HEK293 (cell line): ENCODE measurements at regions of chr1 and their contacts with region 1.

Region 1: DNA sequence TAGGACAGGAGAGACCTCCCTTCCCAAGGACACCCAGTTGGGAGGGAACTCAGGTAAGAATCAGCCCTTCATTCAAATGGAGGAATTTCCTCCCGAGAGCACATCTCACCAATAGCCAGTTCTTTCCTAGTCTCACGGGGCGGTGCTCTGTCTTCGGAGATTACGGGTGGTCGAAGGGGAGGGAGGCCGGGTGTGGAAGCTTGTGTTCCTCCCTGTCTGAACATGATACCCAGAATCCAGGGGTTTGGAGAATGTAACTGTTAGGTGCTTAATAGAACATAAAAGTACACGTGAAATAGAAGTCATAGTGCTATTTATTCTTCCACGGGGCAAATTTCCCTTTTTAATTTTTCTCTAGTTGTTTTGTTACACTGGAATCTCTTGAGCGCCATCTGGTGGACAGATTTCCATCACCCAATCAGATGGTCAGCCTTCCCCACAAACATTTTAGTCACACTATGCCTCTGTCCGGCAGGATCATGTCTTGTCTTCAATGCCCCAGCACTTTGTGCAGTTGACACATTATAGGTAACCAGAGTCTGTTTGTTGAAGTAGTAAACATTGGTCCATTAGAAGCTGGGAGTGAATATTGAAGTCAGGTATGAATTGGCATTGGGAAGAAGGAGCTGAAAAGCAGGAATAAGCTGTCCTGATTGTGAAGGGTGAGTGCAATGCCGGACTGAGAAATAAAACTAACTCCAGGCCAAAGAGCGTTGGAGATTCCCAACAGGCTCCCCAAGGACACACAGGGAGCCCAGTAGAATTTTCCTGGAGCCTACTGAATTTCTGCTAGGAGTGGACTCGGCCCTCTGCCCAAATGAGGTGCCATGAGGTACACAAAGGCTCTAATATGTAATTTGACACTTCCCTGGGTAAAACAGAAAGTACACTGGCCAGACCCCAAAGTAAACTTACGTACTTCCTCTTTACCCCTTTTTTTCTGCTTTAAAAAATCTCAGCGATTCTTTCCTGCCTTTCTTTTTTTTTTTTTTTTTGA is 27.6 kb upstream of the ZNF697 start:
- H3K4me3 ChIP-seq: peak overlapping the region; percentile 34
- H3K27ac ChIP-seq: no peak overlapping the region
- H3K4me1 ChIP-seq: no peaks in the 10 kb centered on the region; the same call in 1 of the 2 replicates
- CTCF ChIP-seq: peak; percentile 71

Region 2: DNA sequence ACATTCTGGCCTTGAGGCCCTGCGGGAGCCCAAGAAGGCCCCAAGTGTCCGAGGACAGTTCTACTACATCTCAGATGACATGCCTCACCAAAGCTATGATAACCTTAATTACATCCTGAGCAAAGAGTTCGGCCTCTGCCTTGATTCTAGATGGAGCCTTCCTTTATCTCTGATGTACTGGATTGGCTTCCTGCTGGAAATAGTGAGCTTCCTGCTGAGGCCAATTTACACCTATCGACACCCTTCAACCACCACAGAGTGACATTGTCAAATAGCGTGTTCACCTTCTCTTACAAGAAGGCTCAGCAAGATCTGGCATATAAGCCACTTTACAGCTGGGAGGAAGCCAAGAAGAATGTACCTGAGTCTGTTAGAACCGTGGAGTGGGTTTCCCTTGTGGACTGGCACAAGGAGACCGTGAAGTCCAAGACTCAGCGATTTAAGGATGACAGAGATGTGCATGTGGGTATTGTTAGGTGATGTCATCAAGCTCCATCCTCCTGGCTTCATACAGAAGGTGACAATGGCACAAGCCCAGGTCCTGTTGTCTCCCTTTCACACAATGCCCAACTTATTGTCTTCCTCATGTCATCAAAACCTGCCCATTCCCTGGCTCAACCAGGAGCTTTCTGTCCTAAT is 66.7 kb before region 1 on chr1:
- CTCF ChIA-PET with region 1: interaction called, 136 read pairs
- POLR2A ChIA-PET with region 1: interaction called, 4 read pairs
- H3K4me3 ChIP-seq: no peak overlapping the region
- H3K27ac ChIP-seq: no peak overlapping the region
- H3K4me1 ChIP-seq: no peaks in the 10 kb centered on the region
- CTCF ChIP-seq: no peak

Region 3: GRCh38 chr1:119621705-119622104 is 53.9 kb before region 1 on chr1:
- CTCF ChIA-PET with region 1: interaction called, 136 read pairs
- POLR2A ChIA-PET with region 1: no interaction called
- H3K4me3 ChIP-seq: no peak overlapping the region
- H3K27ac ChIP-seq: no peak overlapping the region
- H3K4me1 ChIP-seq: peaks cover under 1% of the 10 kb centered on the region; the same call in 1 of the 2 replicates
- CTCF ChIP-seq: no peak

Region 4: DNA sequence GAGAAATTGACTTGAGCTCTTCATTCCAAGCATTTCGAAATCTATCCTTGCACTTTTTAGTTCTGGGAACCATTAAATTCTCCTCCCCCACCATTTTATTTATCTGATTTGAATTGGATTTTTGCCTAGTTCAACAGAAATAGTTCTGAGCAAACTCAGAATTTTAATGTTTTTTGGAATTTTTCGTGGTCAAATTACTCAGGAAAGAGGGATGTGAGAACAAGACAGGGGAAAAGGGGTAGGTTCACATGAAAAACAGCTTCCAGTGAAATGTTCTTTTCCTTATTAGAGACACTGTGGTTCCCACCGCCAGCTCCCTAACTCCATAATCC is 21.8 kb before region 1 on chr1:
- CTCF ChIA-PET with region 1: interaction called, 59 read pairs
- POLR2A ChIA-PET with region 1: interaction called, 5 read pairs
- H3K4me3 ChIP-seq: no peak overlapping the region
- H3K27ac ChIP-seq: no peak overlapping the region
- H3K4me1 ChIP-seq: no peaks in the 10 kb centered on the region
- CTCF ChIP-seq: no peak

Region 5: DNA sequence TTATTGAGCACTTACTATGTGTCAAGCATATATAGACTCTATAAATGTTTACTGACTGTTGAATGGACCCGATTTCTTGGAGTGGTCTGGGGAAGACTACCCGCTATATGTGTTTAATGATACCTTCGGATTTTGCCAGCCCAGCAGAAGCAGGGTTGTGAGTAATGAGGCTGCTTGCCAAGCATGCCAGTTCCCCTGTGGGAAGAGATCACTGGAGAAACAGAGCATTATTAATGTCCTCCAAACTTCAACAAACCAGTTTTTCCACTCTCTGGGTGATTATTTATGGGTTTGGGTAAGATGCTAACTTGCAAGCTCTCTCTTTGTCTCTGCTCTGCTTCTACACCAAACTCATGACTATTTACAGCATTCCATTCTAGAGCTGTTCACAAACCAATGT is 11.0 kb after region 1 on chr1:
- CTCF ChIA-PET with region 1: interaction called, 23 read pairs
- POLR2A ChIA-PET with region 1: no interaction called
- H3K4me3 ChIP-seq: no peak overlapping the region
- H3K27ac ChIP-seq: no peak overlapping the region
- H3K4me1 ChIP-seq: no peaks in the 10 kb centered on the region
- CTCF ChIP-seq: no peak

Region 6: DNA sequence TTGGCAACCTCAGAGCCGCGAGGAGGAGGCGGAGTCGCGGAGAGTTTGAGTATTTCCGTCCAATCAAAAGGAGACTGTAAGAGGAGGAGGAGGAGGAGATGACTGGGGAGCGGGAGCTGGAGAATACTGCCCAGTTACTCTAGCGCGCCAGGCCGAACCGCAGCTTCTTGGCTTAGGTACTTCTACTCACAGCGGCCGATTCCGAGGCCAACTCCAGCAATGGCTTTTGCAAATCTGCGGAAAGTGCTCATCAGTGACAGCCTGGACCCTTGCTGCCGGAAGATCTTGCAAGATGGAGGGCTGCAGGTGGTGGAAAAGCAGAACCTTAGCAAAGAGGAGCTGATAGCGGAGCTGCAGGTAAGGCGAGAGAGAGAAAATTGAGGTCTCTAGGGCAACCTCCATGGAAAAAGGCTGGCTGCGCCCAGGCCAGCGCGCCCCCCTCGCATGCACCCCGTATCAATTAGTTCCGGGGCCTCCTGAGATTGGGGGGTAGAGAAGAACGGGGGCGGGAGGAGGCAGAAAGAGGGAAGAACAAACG is 36.2 kb after region 1 on chr1 and contains the start of gene PHGDH:
- CTCF ChIA-PET with region 1: interaction called, 17 read pairs
- POLR2A ChIA-PET with region 1: interaction called, 11 read pairs
- H3K4me3 ChIP-seq: peak within 1 kb of the TSS; percentile 76
- H3K27ac ChIP-seq: peak within 1 kb of the TSS; percentile 90
- H3K4me1 ChIP-seq: peaks cover 15% of the 10 kb centered on the region
- CTCF ChIP-seq: no peak

Region 7: GRCh38 chr1:119724611-119725218 is 49.1 kb after region 1 on chr1:
- CTCF ChIA-PET with region 1: no interaction called
- POLR2A ChIA-PET with region 1: no interaction called
- H3K4me3 ChIP-seq: no peak overlapping the region
- H3K27ac ChIP-seq: no peak overlapping the region
- H3K4me1 ChIP-seq: no peaks in the 10 kb centered on the region
- CTCF ChIP-seq: no peak